ENCODE measurements at regions of chr6 and their contacts with region 1.

Region 1: DNA sequence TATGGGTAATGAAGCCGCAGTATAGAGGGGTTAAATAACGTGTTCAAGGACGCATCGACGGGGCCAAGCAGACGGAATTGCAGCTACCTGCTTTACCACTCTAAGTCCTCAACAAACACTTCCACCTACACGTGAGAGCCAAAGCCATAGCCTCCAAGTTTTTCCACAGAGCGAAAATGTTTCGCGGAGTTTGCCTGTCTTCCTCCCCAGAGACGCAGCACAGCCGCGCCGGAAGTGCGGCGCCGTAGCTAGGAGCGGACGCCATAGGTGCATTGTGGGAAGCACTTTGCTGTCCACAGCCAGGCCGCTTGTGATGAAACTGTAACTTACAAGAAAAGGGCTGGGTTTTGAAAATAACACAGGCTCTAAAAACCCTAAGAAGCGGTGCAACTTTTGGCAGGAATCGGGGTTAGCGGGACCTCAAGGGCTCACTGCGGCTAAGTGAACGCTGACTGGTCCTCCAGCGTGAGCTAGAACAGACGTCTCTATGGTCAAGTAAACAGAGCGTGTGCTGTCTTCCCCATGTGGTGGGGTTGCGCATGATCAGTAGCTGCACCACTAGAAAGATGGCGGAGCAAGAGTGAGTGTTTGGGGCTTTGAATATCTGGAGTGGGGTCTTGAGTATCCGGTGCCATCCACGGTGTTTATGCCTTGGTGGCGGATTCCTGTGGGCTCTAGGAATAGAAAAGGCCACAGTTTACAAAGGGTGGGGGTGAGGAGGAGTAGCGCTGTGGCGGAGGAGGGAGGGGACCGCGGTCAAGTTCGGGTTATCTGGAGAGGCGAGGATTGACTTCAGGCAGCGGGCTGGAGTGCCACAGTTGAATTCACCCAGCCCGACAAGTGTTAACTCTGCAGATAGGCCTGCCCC is at the start of gene RPL7L1:
- DNase-seq: peak; percentile 88 to 91
- H3K4me3 ChIP-seq: peak within 1 kb of the TSS; percentile 58 to 67
- H3K27ac ChIP-seq: peak within 1 kb of the TSS; percentile 87 to 94
- H3K4me1 ChIP-seq: peaks cover 0 to 28% (median 14%) of the 10 kb centered on the region in 4 donors
- H3K27me3 ChIP-seq: no peaks in the 10 kb centered on the region
- CTCF ChIP-seq: peak; percentile 13 to 46

Region 2: DNA sequence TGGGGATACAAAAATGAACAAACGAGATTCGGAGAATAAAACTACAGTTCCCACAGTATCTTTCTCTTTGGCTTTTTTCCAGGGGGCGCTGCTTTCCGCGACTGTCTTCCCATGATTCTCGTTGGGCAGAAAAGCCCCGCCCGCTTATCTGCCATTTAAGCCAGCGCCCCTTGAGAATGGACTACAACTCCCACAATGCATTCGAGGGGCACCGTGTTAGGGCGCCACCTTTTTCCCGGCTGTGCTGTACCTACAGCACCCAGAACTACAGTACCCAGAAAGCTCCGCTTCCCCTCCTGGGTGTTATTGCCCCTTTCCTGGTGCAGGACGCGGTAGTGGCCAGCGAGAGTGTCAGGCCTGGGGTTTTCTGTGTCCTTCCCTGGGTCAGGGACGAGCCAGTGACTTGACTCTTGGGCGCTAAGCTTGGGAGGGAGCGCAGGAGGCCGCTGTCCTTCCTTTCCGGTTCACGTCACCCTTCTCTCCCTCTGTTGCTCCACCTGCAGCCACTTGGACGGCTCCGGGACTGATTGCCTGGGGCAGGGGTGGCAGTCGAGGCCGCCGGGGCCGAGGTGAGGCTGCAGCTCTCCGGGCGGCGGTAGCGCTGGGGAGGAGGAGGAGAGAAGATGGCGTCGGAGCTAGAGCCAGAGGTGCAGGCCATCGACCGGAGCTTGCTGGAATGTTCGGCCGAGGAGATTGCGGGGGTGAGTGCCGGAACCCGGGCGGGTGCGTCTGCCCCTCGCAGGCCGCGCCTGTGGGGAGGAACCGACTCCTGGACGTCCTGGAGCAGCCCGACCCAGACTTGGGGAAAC is 315.7 kb before region 1 on chr6 and contains the start of gene UBR2:
- intact Hi-C with region 1: no loop called
- DNase-seq: peak; percentile 98 to 99
- H3K4me3 ChIP-seq: peak within 1 kb of the TSS; percentile 97 to 98
- H3K27ac ChIP-seq: peak within 1 kb of the TSS; percentile 97 to 99
- H3K4me1 ChIP-seq: peaks cover 0 to 33% (median 16%) of the 10 kb centered on the region in 4 donors
- H3K27me3 ChIP-seq: no peaks in the 10 kb centered on the region
- CTCF ChIP-seq: peak in 1 of 2 experiments; percentile 14

Region 3: GRCh38 chr6:42661540-42662153 is 218.0 kb before region 1 on chr6:
- intact Hi-C with region 1: loop called (anchors 5 kb)
- DNase-seq: peak; percentile 78 to 85
- H3K4me3 ChIP-seq: no peak overlapping the region
- H3K27ac ChIP-seq: no peak overlapping the region
- H3K4me1 ChIP-seq: peaks cover 0 to 3% (median 0%) of the 10 kb centered on the region in 4 donors
- H3K27me3 ChIP-seq: no peaks in the 10 kb centered on the region
- CTCF ChIP-seq: peak; percentile 82 to 90

Region 4: GRCh38 chr6:42726485-42727086 is 153.0 kb before region 1 on chr6:
- intact Hi-C with region 1: loop called (anchors 5 kb)
- DNase-seq: peak; percentile 79 to 85
- H3K4me3 ChIP-seq: peak overlapping the region; percentile 52 to 71
- H3K27ac ChIP-seq: peak overlapping the region; percentile 67 to 76
- H3K4me1 ChIP-seq: peaks cover 0 to 15% (median 5%) of the 10 kb centered on the region in 4 donors
- H3K27me3 ChIP-seq: no peaks in the 10 kb centered on the region
- CTCF ChIP-seq: peak; percentile 83 to 91

Region 5: GRCh38 chr6:42745707-42746462 is 133.7 kb before region 1 on chr6 and contains the start of gene TBCC:
- intact Hi-C with region 1: loop called (anchors 2 kb)
- DNase-seq: peak; percentile 97 to 98
- H3K4me3 ChIP-seq: peak within 1 kb of the TSS; percentile 80 to 98
- H3K27ac ChIP-seq: peak within 1 kb of the TSS; percentile 90 to 91
- H3K4me1 ChIP-seq: peaks cover 0 to 37% (median 24%) of the 10 kb centered on the region in 4 donors
- H3K27me3 ChIP-seq: no peaks in the 10 kb centered on the region
- CTCF ChIP-seq: no peak

Measured in tibial artery (tissue), 4 donors.